Activated B cell treated with CpG ODN at 0.5 μM for 24 hours (primary cell): ENCODE measurements at regions of chr19 and their contacts with region 1.

Region 1: DNA sequence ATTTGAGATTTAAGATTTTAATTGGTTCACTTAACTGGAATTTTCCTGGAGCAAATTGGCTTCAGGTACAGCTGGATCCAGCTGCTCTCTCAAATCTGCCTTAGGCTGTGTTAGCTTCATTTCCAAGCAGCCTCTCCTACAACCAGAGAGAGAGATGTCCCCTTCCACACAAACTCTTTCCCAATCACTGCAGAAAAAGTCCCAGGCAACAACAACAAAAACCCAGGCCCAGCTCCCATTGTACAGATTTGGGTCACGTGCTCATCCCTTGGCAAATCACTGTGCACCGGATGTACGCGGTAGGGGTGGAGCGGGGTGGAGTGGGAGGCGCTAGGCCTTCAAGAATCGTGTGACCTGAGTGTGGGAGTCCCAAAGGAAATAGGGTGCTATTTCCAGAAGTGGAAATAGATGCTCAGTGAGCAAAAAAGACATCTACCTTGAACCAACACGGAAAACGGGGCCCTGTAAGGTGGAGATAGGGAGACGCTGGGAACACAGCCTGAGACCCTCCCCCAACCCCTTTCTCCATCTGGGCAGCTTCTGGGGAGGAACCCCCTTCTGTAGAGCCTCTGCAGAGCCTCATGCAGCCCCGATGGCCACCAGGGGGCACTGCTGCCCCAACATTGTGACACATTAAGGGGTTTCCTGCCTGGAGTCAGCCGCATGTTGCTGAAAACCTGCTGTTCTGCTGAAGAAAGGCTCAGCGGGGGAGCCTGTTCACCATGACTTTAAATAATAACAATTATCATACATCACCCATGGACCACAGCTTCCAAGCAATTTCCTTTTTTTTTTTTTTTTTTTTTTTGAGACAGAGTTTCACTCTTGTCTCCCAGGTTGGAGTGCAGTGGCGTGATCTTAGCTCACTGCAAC is 25.4 kb downstream of the HPN start:
- DNase-seq: peak; percentile 88
- ATAC-seq: peak; percentile 91
- H3K4me3 Mint-ChIP-seq: peak overlapping the region; percentile 24
- H3K27ac Mint-ChIP-seq: peak overlapping the region; percentile 41
- H3K4me1 Mint-ChIP-seq: peaks cover 30% of the 10 kb centered on the region
- H3K27me3 Mint-ChIP-seq: no peaks in the 10 kb centered on the region
- CTCF ChIP-seq: no peak

Region 2: GRCh38 chr19:33977756-33978685 is 1088.9 kb before region 1 on chr19:
- CTCF ChIA-PET with region 1: no interaction called
- POLR2A ChIA-PET with region 1: no interaction called
- intact Hi-C with region 1: no loop called
- DNase-seq: no peak
- ATAC-seq: no peak
- H3K4me3 Mint-ChIP-seq: no peak overlapping the region
- H3K27ac Mint-ChIP-seq: no peak overlapping the region
- H3K4me1 Mint-ChIP-seq: no peaks in the 10 kb centered on the region
- H3K27me3 Mint-ChIP-seq: peaks cover 23% of the 10 kb centered on the region
- CTCF ChIP-seq: no peak

Region 3: DNA sequence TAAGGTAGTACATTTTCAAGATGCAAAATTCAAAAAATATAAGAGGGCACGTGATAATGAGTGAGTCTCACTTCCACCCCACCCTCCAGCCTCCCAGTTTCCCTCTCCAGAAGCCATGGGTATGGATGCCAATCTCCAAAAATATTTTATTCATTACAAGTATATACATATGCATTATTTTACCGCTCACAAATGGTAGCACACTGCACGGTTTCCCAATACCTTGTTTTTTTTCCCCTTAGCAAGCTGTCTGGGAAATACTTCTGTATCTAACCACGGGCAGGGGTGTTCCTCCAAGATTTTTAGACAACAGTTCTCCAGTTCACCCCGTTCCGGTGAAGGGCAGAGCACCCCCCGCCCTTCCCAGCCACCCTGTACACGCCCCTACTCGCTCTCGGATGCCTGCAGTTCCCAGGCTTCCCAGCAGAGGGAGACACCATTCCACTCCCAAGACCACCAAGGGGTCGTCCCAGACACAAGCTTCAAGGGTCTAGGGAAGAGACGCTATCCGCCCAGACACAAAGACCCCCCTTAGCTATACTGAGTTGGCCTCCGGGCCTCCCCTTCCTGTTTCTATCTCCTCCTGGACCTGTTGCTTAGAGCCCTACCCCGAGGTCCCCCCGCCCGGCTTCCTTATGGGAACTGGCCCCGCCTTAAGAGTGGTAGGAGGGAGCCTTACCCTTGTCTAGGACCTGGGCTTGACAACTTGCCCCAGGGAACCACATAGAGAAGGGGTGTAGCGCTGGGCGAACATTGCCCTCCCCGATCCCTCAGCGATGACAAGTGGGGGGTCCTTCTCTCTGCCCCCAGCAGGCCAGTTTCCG is 47.6 kb after region 1 on chr19:
- CTCF ChIA-PET with region 1: interaction called, 6 read pairs
- POLR2A ChIA-PET with region 1: no interaction called
- intact Hi-C with region 1: loop called (anchors 1 kb)
- DNase-seq: peak; percentile 75
- ATAC-seq: peak; percentile 89
- H3K4me3 Mint-ChIP-seq: no peak overlapping the region
- H3K27ac Mint-ChIP-seq: no peak overlapping the region
- H3K4me1 Mint-ChIP-seq: peaks cover 4% of the 10 kb centered on the region
- H3K27me3 Mint-ChIP-seq: peaks cover 7% of the 10 kb centered on the region
- CTCF ChIP-seq: peak; percentile 49

Region 4: GRCh38 chr19:35135389-35135909 is 68.5 kb after region 1 on chr19:
- CTCF ChIA-PET with region 1: interaction called, 31 read pairs
- POLR2A ChIA-PET with region 1: interaction called, 3 read pairs
- intact Hi-C with region 1: loop called (anchors 1 kb)
- DNase-seq: peak; percentile 63
- ATAC-seq: peak; percentile 90
- H3K4me3 Mint-ChIP-seq: no peak overlapping the region
- H3K27ac Mint-ChIP-seq: no peak overlapping the region
- H3K4me1 Mint-ChIP-seq: peaks cover 15% of the 10 kb centered on the region
- H3K27me3 Mint-ChIP-seq: no peaks in the 10 kb centered on the region
- CTCF ChIP-seq: peak; percentile 75

Region 5: GRCh38 chr19:35154525-35155406 is 87.8 kb after region 1 on chr19 and contains the start of gene FXYD5:
- CTCF ChIA-PET with region 1: no interaction called
- POLR2A ChIA-PET with region 1: no interaction called
- intact Hi-C with region 1: no loop called
- DNase-seq: peak; percentile 55
- ATAC-seq: peak; percentile 77
- H3K4me3 Mint-ChIP-seq: peak within 1 kb of the TSS; percentile 99
- H3K27ac Mint-ChIP-seq: peak within 1 kb of the TSS; percentile 94
- H3K4me1 Mint-ChIP-seq: peaks cover 49% of the 10 kb centered on the region
- H3K27me3 Mint-ChIP-seq: no peaks in the 10 kb centered on the region
- CTCF ChIP-seq: no peak
- total RNA-seq, gene FXYD5: 103 and 125 TPM in 2 replicates

Region 6: DNA sequence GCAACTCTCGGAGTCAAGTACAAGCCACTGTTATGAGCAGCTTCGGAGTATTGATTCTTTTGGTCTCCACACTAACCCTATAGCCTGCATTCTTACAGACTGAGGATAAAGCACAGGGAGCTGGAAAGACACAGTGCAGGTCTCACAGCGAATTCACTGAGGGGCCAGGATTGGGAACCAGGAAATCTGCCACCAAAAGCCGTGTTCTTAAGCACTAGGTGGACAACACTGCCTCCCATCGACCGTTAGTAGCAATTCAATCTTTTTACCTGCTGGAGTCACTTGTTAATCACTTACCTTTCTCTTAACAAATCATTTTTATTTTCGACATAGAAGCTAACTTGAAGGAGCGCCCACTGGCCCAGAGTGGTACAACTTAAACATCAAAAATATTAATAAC is 525.3 kb after region 1 on chr19:
- CTCF ChIA-PET with region 1: no interaction called
- POLR2A ChIA-PET with region 1: no interaction called
- intact Hi-C with region 1: loop called (anchors 2 kb)
- DNase-seq: no peak
- ATAC-seq: peak; percentile 54
- H3K4me3 Mint-ChIP-seq: no peak overlapping the region
- H3K27ac Mint-ChIP-seq: no peak overlapping the region
- H3K4me1 Mint-ChIP-seq: no peaks in the 10 kb centered on the region
- H3K27me3 Mint-ChIP-seq: no peaks in the 10 kb centered on the region
- CTCF ChIP-seq: no peak